ENCODE measurements at regions of chr1 and their contacts with region 1.

Region 1: GRCh38 chr1:191134796-191135195 is 657.1 kb upstream of the BRINP3 start:
- DNase-seq: no peak
- H3K4me3 ChIP-seq: no peak overlapping the region
- H3K27ac ChIP-seq: no peak overlapping the region
- H3K4me1 ChIP-seq: no peaks in the 10 kb centered on the region
- H3K27me3 ChIP-seq: no peaks in the 10 kb centered on the region
- CTCF ChIP-seq: no peak

Region 2: DNA sequence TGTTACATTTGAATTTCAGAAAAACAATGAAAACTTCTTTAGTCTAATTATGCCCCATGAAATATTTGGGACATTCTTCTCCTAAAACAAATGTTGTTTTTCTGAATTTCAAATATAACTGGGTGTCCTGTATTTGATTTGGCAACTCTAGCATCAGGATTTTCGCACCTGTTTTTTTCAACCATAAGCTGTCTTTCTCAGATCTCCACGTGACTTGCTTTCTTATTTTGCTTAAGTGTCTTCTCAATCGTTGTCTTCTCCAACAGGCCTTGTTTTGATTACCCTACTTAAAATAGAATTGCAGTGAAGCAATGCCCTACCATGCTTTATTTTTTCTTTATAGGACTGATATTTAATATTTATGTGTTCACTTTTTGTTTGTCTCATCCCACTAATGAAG is 270.6 kb after region 1 on chr1:
- intact Hi-C with region 1: no loop called
- DNase-seq: no peak
- H3K4me3 ChIP-seq: no peak overlapping the region
- H3K27ac ChIP-seq: no peak overlapping the region
- H3K4me1 ChIP-seq: no peaks in the 10 kb centered on the region
- H3K27me3 ChIP-seq: no peaks in the 10 kb centered on the region
- CTCF ChIP-seq: no peak

Region 3: GRCh38 chr1:191739554-191739953 is 604.8 kb after region 1 on chr1:
- intact Hi-C with region 1: loop called (anchors 5 kb)
- DNase-seq: no peak
- H3K4me3 ChIP-seq: no peak overlapping the region
- H3K27ac ChIP-seq: no peak overlapping the region
- H3K4me1 ChIP-seq: no peaks in the 10 kb centered on the region
- H3K27me3 ChIP-seq: no peaks in the 10 kb centered on the region
- CTCF ChIP-seq: no peak

Measured in tibial artery (tissue), 4 donors.